H1 (cell line): ENCODE measurements at regions of chr18 and their contacts with region 1.

Region 1: GRCh38 chr18:36015629-36016028 is 43.1 kb downstream of the RMP24 start:
- DNase-seq: no peak
- H3K4me3 ChIP-seq: no peak overlapping the region
- H3K27ac ChIP-seq: no peak overlapping the region
- H3K4me1 ChIP-seq: no peaks in the 10 kb centered on the region
- H3K27me3 ChIP-seq: no peaks in the 10 kb centered on the region
- CTCF ChIP-seq: no peak
- EP300 ChIP-seq: no peak
- POLR2A ChIP-seq: no peak
- RAD21 ChIP-seq: no peak

Region 2: DNA sequence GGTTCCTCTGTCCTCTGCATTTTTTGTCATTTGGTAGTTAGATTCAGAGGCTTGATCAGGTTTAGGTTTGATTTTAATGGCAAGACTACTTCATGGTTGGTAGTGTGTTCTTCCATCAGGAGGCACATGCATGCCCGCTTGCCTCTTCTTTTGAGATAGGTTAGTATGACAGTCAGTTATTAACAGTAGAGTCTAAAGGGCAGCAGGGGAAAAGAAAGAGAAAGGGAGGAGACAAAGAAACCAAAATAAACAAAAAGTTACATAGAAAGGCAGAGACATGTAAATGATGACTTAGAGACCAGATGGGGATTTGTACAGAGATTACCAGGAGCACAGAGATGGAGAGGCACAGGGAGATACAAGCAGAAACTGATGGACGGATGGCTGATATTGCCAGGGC is 53.3 kb before region 1 on chr18:
- CTCF ChIA-PET with region 1: no interaction called
- POLR2A ChIA-PET with region 1: no interaction called
- DNase-seq: no peak
- H3K4me3 ChIP-seq: no peak overlapping the region
- H3K27ac ChIP-seq: no peak overlapping the region
- H3K4me1 ChIP-seq: no peaks in the 10 kb centered on the region
- H3K27me3 ChIP-seq: no peaks in the 10 kb centered on the region
- CTCF ChIP-seq: no peak
- EP300 ChIP-seq: no peak
- POLR2A ChIP-seq: no peak
- RAD21 ChIP-seq: no peak

Region 3: GRCh38 chr18:36031407-36031806 is 15.8 kb after region 1 on chr18:
- CTCF ChIA-PET with region 1: interaction called, 11 read pairs
- POLR2A ChIA-PET with region 1: interaction called, 4 read pairs
- DNase-seq: no peak
- H3K4me3 ChIP-seq: no peak overlapping the region
- H3K27ac ChIP-seq: no peak overlapping the region
- H3K4me1 ChIP-seq: no peaks in the 10 kb centered on the region
- H3K27me3 ChIP-seq: no peaks in the 10 kb centered on the region
- CTCF ChIP-seq: no peak
- EP300 ChIP-seq: no peak
- POLR2A ChIP-seq: no peak
- RAD21 ChIP-seq: no peak

Region 4: DNA sequence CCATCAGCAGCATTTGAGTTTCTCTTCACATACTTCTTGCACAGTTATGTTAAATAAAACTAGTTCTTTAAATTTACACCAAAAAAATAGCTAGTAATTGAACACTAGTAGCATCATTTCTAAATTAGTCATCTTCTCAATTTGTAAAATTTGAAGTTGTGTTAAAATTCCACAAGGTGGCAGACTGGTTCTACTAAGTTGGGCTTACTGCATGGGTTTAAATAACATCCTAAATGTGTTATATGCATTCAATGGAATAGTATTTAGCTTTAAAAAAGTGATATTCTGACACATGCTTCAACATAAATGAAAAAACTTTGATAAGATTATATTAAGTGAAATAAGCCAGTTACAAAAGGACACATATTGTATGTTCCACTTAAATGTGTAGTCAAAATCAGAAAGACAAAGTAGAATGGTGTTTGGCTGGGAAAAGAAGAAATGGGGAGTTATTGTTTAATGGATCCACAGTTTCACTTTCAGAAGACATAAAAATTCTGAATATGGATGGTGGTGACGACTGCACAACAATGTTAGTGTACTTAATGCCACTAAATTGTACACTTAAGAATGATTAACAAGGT is 80.4 kb after region 1 on chr18:
- CTCF ChIA-PET with region 1: interaction called, 11 read pairs
- POLR2A ChIA-PET with region 1: no interaction called
- DNase-seq: no peak
- H3K4me3 ChIP-seq: no peak overlapping the region
- H3K27ac ChIP-seq: no peak overlapping the region
- H3K4me1 ChIP-seq: no peaks in the 10 kb centered on the region; a peak in 1 of 7 replicates
- H3K27me3 ChIP-seq: no peaks in the 10 kb centered on the region; a peak in 1 of 7 replicates
- CTCF ChIP-seq: peak in 2 of 3 experiments; percentile 50 to 52; a peak in 2 of 4 replicates
- EP300 ChIP-seq: no peak
- POLR2A ChIP-seq: no peak
- RAD21 ChIP-seq: peak; percentile 68 to 74

Region 5: GRCh38 chr18:36120300-36120778 is 104.7 kb after region 1 on chr18:
- CTCF ChIA-PET with region 1: interaction called, 12 read pairs
- POLR2A ChIA-PET with region 1: no interaction called
- DNase-seq: no peak
- H3K4me3 ChIP-seq: no peak overlapping the region
- H3K27ac ChIP-seq: no peak overlapping the region
- H3K4me1 ChIP-seq: no peaks in the 10 kb centered on the region
- H3K27me3 ChIP-seq: no peaks in the 10 kb centered on the region
- CTCF ChIP-seq: no peak
- EP300 ChIP-seq: no peak
- POLR2A ChIP-seq: no peak
- RAD21 ChIP-seq: no peak

Region 6: DNA sequence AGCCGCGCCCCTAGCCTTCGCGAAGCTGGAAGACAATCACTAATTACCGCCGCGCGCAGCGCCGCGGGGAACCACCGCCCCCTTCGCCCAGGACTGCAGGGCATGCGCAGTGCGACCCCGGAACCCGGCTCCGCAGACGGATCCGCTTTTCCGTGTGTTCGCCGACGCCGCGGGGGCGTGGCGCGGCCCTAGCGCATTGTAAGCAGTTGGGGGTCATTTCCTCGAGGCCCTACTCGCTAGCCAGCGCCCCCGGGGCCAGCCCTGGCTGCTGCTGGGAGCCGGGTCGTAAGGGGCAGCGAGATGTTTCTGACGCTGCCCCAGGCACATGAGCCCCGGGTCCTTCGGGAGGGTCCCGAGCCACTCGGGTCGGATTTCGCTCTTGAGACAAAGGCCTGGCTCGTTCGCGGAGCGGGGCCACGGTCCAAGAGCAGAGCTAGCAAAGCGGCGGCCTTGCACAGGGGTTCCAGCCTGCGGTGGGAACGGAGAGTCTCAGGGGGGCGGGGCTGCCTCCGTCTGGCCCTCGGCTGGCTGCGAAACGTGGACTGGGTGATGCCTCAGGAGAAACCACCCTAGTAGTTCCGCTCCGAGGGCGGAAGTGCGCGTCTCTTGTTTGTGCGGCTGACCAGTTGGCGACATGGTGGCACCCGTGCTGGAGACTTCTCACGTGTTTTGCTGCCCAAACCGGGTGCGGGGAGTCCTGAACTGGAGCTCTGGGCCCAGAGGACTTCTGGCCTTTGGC is 113.8 kb after region 1 on chr18 and contains the starts of genes ELP2 and SLC39A6:
- CTCF ChIA-PET with region 1: interaction called, 14 read pairs
- POLR2A ChIA-PET with region 1: interaction called, 3 read pairs
- DNase-seq: peak; percentile 89 to 98
- H3K4me3 ChIP-seq: peak within 1 kb of the TSS; percentile 94 to 99 (median 95)
- H3K27ac ChIP-seq: peak within 1 kb of the TSS; percentile 95
- H3K4me1 ChIP-seq: peaks cover 0 to 6% (median 3%) of the 10 kb centered on the region in 4 experiments; a peak in 3 of 7 replicates
- H3K27me3 ChIP-seq: 0 out of 7 replicates have a peak, but pooled peaks cover 0 to 2% (median 0%) of the 10 kb centered on the region in 4 experiments
- CTCF ChIP-seq: peak in 1 of 3 experiments; percentile 0; a peak in 1 of 4 replicates
- EP300 ChIP-seq: no peak; a peak in 1 of 3 replicates
- POLR2A ChIP-seq: peak in 1 of 2 experiments; percentile 81; a peak in 2 of 3 replicates
- RAD21 ChIP-seq: no peak
- total RNA-seq, gene ELP2: 156 and 165 TPM in 2 replicates
- total RNA-seq, gene SLC39A6: 36.8 and 37.2 TPM in 2 replicates